B cell (primary cell): ENCODE measurements at regions of chr7 and their contacts with region 1.

Region 1: GRCh38 chr7:30396389-30396788 is 82.2 kb downstream of the NOD1 start:
- DNase-seq: peak; percentile 24
- ATAC-seq: no peak
- H3K4me3 ChIP-seq: no peak overlapping the region
- H3K4me3 Mint-ChIP-seq: no peak overlapping the region
- H3K27ac ChIP-seq: no peak overlapping the region
- H3K27ac Mint-ChIP-seq: no peak overlapping the region
- H3K4me1 ChIP-seq: peaks cover 0 to 2% of the 10 kb centered on the region in 2 donors
- H3K4me1 Mint-ChIP-seq: peaks cover 4% of the 10 kb centered on the region
- H3K27me3 ChIP-seq: no peaks in the 10 kb centered on the region
- H3K27me3 Mint-ChIP-seq: no peaks in the 10 kb centered on the region
- CTCF ChIP-seq: no peak

Region 2: DNA sequence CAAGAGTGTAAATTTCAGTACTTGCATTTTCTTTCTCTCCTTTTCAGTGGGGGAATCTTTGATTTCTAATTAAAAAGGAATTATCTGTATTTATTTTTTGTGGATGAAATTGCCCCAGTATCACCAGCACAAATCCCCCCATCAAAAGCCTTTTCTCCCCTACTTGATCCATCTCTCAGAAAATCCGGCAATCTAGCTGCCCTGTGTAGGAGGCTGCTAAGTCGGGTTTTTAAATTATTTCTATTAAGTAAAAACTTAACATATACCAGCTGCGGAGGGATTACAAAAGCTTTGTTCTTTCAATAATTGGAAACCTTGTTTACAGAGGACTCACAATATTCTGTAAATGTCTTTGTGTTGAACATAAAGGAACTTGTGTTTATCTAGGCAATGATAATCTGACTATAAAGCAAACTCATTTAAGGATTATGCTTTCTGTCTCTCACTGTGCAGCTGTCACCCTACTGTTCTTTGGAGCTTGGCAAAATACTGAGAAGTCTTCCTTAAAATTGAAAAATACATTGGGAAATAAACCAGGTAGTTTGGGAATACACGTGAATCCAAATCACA is 1010.1 kb before region 1 on chr7:
- CTCF ChIA-PET with region 1: no interaction called
- POLR2A ChIA-PET with region 1: no interaction called
- intact Hi-C with region 1: no loop called
- DNase-seq: no peak
- ATAC-seq: no peak
- H3K4me3 ChIP-seq: no peak overlapping the region
- H3K4me3 Mint-ChIP-seq: no peak overlapping the region
- H3K27ac ChIP-seq: no peak overlapping the region
- H3K27ac Mint-ChIP-seq: no peak overlapping the region
- H3K4me1 ChIP-seq: no peaks in the 10 kb centered on the region
- H3K4me1 Mint-ChIP-seq: no peaks in the 10 kb centered on the region
- H3K27me3 ChIP-seq: no peaks in the 10 kb centered on the region
- H3K27me3 Mint-ChIP-seq: no peaks in the 10 kb centered on the region
- CTCF ChIP-seq: no peak

Region 3: GRCh38 chr7:30366606-30367005 is 29.8 kb before region 1 on chr7:
- CTCF ChIA-PET with region 1: no interaction called
- POLR2A ChIA-PET with region 1: no interaction called
- intact Hi-C with region 1: no loop called
- DNase-seq: no peak
- ATAC-seq: no peak
- H3K4me3 ChIP-seq: no peak overlapping the region
- H3K4me3 Mint-ChIP-seq: no peak overlapping the region
- H3K27ac ChIP-seq: no peak overlapping the region
- H3K27ac Mint-ChIP-seq: no peak overlapping the region
- H3K4me1 ChIP-seq: peaks cover 4 to 9% of the 10 kb centered on the region in 2 donors
- H3K4me1 Mint-ChIP-seq: peaks cover 24% of the 10 kb centered on the region
- H3K27me3 ChIP-seq: no peaks in the 10 kb centered on the region
- H3K27me3 Mint-ChIP-seq: no peaks in the 10 kb centered on the region
- CTCF ChIP-seq: no peak

Region 4: DNA sequence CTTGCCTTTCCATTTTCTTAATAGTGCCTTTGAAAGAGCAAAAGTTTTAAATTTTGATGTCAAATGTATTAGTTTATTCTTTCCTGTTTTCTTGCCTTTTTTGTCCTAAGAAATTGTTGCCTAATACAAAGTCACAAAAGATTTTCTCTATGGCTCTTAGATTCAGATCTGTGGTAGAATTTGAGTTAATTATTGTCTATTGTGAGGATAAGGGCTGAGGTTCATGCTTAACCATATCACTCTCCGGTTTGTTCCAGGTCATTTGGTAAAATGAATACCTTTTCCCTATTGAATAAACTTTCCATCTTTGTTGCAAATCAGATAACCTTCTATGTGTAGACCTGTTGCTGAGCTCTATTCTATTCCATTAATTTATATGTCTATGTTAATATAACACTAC is 13.8 kb before region 1 on chr7:
- CTCF ChIA-PET with region 1: no interaction called
- POLR2A ChIA-PET with region 1: no interaction called
- intact Hi-C with region 1: no loop called
- DNase-seq: no peak
- ATAC-seq: no peak
- H3K4me3 ChIP-seq: no peak overlapping the region
- H3K4me3 Mint-ChIP-seq: no peak overlapping the region
- H3K27ac ChIP-seq: no peak overlapping the region
- H3K27ac Mint-ChIP-seq: no peak overlapping the region
- H3K4me1 ChIP-seq: no peaks in the 10 kb centered on the region
- H3K4me1 Mint-ChIP-seq: no peaks in the 10 kb centered on the region
- H3K27me3 ChIP-seq: no peaks in the 10 kb centered on the region
- H3K27me3 Mint-ChIP-seq: no peaks in the 10 kb centered on the region
- CTCF ChIP-seq: no peak

Region 5: DNA sequence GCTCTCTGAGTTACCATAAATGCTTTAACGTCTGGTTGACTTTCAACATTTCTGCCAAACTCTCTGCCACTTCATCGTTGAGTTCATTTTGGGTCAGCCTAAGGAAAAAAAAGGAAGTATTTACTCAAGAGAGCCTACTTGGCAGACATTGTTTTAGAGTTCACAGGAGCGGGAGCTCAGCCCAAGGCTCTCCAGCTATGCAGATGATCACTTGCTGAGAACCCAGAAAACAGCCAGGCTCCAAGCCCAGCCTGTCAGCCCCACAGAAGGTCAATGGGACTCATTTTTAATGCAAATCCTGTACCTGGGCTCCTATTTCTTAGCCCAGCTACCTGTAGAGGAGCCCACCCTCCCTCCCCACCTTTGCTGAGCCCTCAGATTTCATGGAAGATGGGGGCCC is 36.7 kb after region 1 on chr7:
- CTCF ChIA-PET with region 1: interaction called, 3 read pairs
- POLR2A ChIA-PET with region 1: no interaction called
- intact Hi-C with region 1: loop called (anchors 5 kb)
- DNase-seq: peak; percentile 24
- ATAC-seq: no peak
- H3K4me3 ChIP-seq: peak overlapping the region in 1 of 5 experiments; percentile 24
- H3K4me3 Mint-ChIP-seq: peak overlapping the region; percentile 53
- H3K27ac ChIP-seq: peak overlapping the region; percentile 61 to 72
- H3K27ac Mint-ChIP-seq: peak overlapping the region; percentile 86
- H3K4me1 ChIP-seq: peaks cover 74 to 88% of the 10 kb centered on the region in 2 donors
- H3K4me1 Mint-ChIP-seq: peaks cover 76% of the 10 kb centered on the region
- H3K27me3 ChIP-seq: no peaks in the 10 kb centered on the region
- H3K27me3 Mint-ChIP-seq: no peaks in the 10 kb centered on the region
- CTCF ChIP-seq: no peak

Region 6: DNA sequence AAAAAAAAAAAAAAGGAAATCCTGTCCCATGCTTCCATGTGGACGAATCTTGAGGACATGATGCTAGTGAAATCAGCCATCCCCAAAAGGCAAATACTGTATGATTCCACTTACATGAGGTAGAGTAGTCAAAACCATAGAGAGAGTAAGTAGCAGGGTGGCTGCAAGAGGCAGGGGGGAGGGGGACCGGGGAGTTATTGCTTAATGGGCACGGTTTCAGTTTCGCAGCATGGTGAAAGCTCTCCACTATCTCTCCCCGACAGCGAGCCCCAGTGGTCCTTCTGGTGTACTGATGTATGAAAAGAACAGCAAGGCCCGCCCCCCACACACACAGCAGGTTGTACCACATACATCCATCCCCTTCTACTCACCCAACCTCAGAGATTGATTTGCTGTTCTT is 49.4 kb after region 1 on chr7:
- CTCF ChIA-PET with region 1: interaction called, 13 read pairs
- POLR2A ChIA-PET with region 1: no interaction called
- intact Hi-C with region 1: loop called (anchors 5 kb)
- DNase-seq: peak; percentile 91
- ATAC-seq: peak; percentile 100
- H3K4me3 ChIP-seq: no peak overlapping the region
- H3K4me3 Mint-ChIP-seq: no peak overlapping the region
- H3K27ac ChIP-seq: peak overlapping the region in 1 of 2 donors; percentile 64
- H3K27ac Mint-ChIP-seq: peak overlapping the region; percentile 75
- H3K4me1 ChIP-seq: peaks cover 12% of the 10 kb centered on the region in 2 donors
- H3K4me1 Mint-ChIP-seq: peaks cover 8% of the 10 kb centered on the region
- H3K27me3 ChIP-seq: no peaks in the 10 kb centered on the region
- H3K27me3 Mint-ChIP-seq: no peaks in the 10 kb centered on the region
- CTCF ChIP-seq: peak; percentile 71